ENCODE measurements at regions of chr5 and their contacts with region 1.

Region 1: DNA sequence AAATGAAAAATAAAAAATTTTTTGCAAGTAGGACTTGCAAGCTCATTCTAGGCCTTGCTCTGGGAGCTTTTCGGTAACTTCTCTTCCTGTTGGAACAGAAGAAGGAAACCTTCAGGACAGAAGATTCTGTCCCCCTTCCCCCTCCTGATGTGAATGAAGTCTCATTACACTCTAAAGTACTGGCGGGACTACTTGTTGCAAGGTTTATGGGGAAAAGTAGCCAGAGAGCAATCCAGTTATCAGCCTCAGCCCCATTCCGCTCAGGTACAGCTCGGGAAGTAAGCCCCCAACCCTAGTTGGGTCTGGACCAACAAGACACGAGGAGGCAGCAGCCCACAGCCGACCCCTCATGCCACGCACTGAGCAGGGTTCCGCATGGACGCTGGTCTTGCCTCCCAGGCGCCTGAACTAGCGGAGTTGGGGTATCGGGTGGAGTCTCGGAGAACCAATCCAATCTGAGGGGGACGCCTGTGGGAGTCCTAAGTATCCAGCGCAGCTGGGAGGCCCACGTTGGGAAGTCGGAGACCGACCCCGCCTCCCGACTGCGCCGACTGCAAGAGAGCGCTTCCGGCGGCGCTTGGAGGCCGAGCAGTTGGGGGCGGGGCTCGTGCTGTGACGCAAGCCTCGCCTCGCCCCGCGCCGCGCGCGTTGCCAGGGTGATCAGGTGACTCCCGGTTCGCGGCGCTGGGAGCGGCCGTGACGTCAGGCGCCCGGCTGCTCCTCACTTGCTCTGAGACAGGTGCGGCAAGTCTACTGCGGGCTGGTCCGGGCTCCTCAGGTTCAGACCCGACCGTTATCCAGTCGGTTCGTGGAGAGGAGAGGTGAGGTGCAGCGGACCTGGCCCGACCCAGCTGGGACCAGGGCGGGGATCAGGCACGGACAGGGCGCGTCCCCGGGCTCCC is at the start of gene CYSTM1:
- DNase-seq: peak; percentile 92 to 98 (median 96)
- ATAC-seq: peak; percentile 83
- H3K4me3 ChIP-seq: peak within 1 kb of the TSS; percentile 68 to 83
- H3K4me3 Mint-ChIP-seq: peak within 1 kb of the TSS; percentile 91
- H3K27ac ChIP-seq: peak within 1 kb of the TSS; percentile 79 to 88
- H3K27ac Mint-ChIP-seq: peak within 1 kb of the TSS; percentile 95
- H3K4me1 ChIP-seq: peaks cover 9% of the 10 kb centered on the region
- H3K4me1 Mint-ChIP-seq: peaks cover 13% of the 10 kb centered on the region
- H3K27me3 ChIP-seq: peaks cover 0 to 2% of the 10 kb centered on the region in 2 experiments
- H3K27me3 Mint-ChIP-seq: peaks cover 5% of the 10 kb centered on the region
- CTCF ChIP-seq: no peak
- total RNA-seq, gene CYSTM1: 8.1 to 8.6 TPM

Region 2: GRCh38 chr5:139711067-139711905 is 463.4 kb before region 1 on chr5:
- CTCF ChIA-PET with region 1: no interaction called
- POLR2A ChIA-PET with region 1: no interaction called
- intact Hi-C with region 1: loop called in 1 of 2 experiments (anchors 2 kb)
- DNase-seq: peak; percentile 32 to 90 (median 71)
- ATAC-seq: peak; percentile 60
- H3K4me3 ChIP-seq: peak overlapping the region; percentile 63 to 64
- H3K4me3 Mint-ChIP-seq: peak overlapping the region; percentile 77
- H3K27ac ChIP-seq: peak overlapping the region; percentile 66 to 84
- H3K27ac Mint-ChIP-seq: no peak overlapping the region
- H3K4me1 ChIP-seq: peaks cover 28% of the 10 kb centered on the region
- H3K4me1 Mint-ChIP-seq: peaks cover 39% of the 10 kb centered on the region
- H3K27me3 ChIP-seq: no peaks in the 10 kb centered on the region
- H3K27me3 Mint-ChIP-seq: no peaks in the 10 kb centered on the region
- CTCF ChIP-seq: no peak

Region 3: DNA sequence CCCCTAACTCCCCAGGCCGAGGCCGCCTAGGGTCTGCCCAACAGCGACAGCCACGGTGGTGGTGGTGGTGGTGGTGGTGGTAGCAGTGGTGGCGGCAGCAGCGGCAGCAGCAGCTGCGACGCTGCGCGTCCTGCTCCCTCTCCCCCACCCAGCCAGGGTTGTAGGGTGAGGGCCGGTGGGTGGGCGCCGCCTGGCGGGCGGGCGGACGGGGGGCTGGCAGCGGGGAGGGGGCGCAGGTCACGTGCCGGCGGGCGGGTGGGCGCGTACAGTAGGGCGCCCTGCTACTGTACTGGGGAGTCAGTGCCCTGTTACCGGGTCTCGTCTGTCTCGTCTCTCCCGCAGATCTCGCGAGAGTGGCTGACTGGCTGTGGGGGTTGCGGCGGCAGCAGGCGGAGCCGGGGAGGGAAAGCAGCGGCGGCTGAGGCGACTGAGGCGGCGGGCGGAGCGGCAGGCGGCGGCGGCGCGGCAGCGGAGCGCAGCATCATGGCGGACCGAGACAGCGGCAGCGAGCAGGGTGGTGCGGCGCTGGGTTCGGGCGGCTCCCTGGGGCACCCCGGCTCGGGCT is 60.9 kb before region 1 on chr5 and contains the start of gene PURA:
- CTCF ChIA-PET with region 1: no interaction called
- POLR2A ChIA-PET with region 1: interaction called, 8 read pairs
- intact Hi-C with region 1: loop called (anchors 1 to 2 kb)
- DNase-seq: peak; percentile 93 to 98 (median 98)
- ATAC-seq: peak; percentile 91
- H3K4me3 ChIP-seq: peak within 1 kb of the TSS; percentile 74 to 88
- H3K4me3 Mint-ChIP-seq: peak within 1 kb of the TSS; percentile 91
- H3K27ac ChIP-seq: peak within 1 kb of the TSS; percentile 82 to 84
- H3K27ac Mint-ChIP-seq: peak within 1 kb of the TSS; percentile 95
- H3K4me1 ChIP-seq: peaks cover 69% of the 10 kb centered on the region
- H3K4me1 Mint-ChIP-seq: peaks cover 77% of the 10 kb centered on the region
- H3K27me3 ChIP-seq: no peaks in the 10 kb centered on the region
- H3K27me3 Mint-ChIP-seq: peaks cover 12% of the 10 kb centered on the region
- CTCF ChIP-seq: no peak
- total RNA-seq, gene PURA: 4.0 to 4.3 TPM

Region 4: DNA sequence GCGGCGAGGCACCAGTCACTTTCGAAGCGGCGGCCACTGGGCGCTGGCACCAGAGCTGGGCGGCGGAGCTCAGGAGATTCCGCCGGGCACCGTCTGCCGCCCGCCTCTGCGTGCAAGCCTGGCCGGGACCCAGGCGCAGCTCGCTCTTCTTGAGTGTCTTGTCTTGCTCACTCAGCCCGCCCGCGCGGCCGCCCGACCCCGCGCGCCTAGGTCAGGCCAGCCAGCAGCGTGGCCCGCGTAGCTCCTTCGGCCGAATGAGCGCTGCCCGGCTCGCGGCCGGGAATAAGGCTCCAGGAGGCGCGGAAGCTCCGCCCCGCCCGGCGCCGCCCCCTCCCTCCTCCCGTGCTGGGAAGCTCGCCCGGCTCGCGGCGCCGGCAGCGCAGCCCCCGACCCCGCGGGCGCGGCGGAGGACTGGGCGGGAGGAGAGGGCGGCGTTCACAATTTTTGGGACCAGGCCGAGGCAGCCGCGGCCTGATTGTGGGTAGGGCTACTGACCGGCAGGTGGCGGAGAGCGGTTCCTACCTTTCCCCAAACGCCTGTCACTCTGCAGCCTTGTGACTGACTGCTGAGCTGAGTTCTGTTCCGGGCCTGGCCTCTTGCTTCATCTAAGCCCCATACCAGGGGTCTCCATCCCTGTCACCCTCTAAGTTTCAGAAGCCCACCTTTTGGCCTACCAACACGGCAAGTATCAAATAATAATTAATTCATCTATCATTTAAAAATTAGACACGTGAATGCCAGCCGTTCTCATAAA is 171.8 kb after region 1 on chr5 and contains the start of gene HBEGF:
- CTCF ChIA-PET with region 1: interaction called, 3 read pairs
- POLR2A ChIA-PET with region 1: interaction called, 3 read pairs
- intact Hi-C with region 1: loop called in 1 of 2 experiments (anchors 5 kb)
- DNase-seq: peak in 8 of 9 experiments; percentile 21 to 66 (median 50)
- ATAC-seq: peak; percentile 73
- H3K4me3 ChIP-seq: peak within 1 kb of the TSS; percentile 48 to 50
- H3K4me3 Mint-ChIP-seq: peak within 1 kb of the TSS; percentile 72
- H3K27ac ChIP-seq: no peak within 1 kb of the TSS
- H3K27ac Mint-ChIP-seq: no peak within 1 kb of the TSS
- H3K4me1 ChIP-seq: peaks cover 23% of the 10 kb centered on the region
- H3K4me1 Mint-ChIP-seq: peaks cover 33% of the 10 kb centered on the region
- H3K27me3 ChIP-seq: peaks cover 0 to 13% of the 10 kb centered on the region in 2 experiments
- H3K27me3 Mint-ChIP-seq: peaks cover 27% of the 10 kb centered on the region
- CTCF ChIP-seq: peak; percentile 41
- total RNA-seq, gene HBEGF: 0.30 to 0.50 TPM

Region 5: DNA sequence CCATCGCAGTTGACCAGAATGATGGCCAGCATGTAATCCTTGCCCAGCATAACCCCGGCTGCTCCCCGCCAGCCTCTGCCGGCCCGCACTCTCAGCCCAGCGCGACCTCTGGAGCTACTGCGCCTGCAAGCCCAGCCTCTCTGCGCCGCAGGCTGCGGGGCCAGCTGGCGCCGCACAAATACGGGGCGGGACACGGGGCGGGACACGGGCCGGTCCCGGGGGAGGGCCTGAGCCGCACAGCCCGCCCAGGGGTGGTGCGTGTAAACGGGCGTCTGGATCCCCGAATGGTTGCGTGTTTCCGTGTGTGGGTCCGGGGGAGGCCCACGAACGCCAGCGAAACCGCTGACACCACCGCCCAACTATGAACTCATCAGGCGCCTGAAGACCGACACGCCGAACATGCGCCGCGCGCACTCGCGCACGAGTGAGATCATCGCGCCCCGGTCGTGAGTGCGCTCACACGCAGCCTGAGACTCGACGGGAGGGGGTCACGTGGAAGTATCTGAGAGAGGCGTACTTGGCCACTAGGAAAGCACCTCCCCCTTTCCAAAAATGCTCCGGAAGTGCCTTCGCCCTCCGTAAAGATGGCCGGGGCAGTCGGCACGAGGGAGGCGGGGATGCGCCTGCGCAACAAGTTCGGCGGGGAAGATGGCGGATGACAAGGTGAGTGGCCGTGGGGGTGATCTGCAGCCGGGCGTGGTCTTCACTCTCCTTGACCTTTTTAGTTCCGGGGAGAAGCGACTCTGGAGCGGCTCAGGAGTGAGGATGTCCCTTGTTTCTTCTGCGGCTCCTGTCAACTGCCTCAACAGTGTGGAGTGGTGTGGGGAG is 389.7 kb after region 1 on chr5 and contains the starts of genes APBB3 and SLC35A4:
- CTCF ChIA-PET with region 1: no interaction called
- POLR2A ChIA-PET with region 1: no interaction called
- intact Hi-C with region 1: loop called in 1 of 2 experiments (anchors 2 kb)
- DNase-seq: peak; percentile 92 to 100 (median 95)
- ATAC-seq: peak; percentile 88
- H3K4me3 ChIP-seq: peak within 1 kb of the TSS; percentile 52 to 79
- H3K4me3 Mint-ChIP-seq: peak within 1 kb of the TSS; percentile 88
- H3K27ac ChIP-seq: peak within 1 kb of the TSS; percentile 73 to 92
- H3K27ac Mint-ChIP-seq: peak within 1 kb of the TSS; percentile 94
- H3K4me1 ChIP-seq: peaks cover 30% of the 10 kb centered on the region
- H3K4me1 Mint-ChIP-seq: peaks cover 62% of the 10 kb centered on the region
- H3K27me3 ChIP-seq: no peaks in the 10 kb centered on the region
- H3K27me3 Mint-ChIP-seq: no peaks in the 10 kb centered on the region
- CTCF ChIP-seq: no peak
- total RNA-seq, gene APBB3: 51.0 to 51.7 TPM
- total RNA-seq, gene SLC35A4: 14.8 to 19.4 TPM

Region 6: GRCh38 chr5:140710899-140711552 is 536.3 kb after region 1 on chr5:
- CTCF ChIA-PET with region 1: no interaction called
- POLR2A ChIA-PET with region 1: no interaction called
- intact Hi-C with region 1: loop called in 1 of 2 experiments (anchors 5 kb)
- DNase-seq: peak; percentile 66 to 95 (median 85)
- ATAC-seq: peak; percentile 83
- H3K4me3 ChIP-seq: peak overlapping the region; percentile 58 to 74
- H3K4me3 Mint-ChIP-seq: peak overlapping the region; percentile 99
- H3K27ac ChIP-seq: peak overlapping the region; percentile 72 to 86
- H3K27ac Mint-ChIP-seq: peak overlapping the region; percentile 99
- H3K4me1 ChIP-seq: no peaks in the 10 kb centered on the region
- H3K4me1 Mint-ChIP-seq: peaks cover 16% of the 10 kb centered on the region
- H3K27me3 ChIP-seq: no peaks in the 10 kb centered on the region
- H3K27me3 Mint-ChIP-seq: no peaks in the 10 kb centered on the region
- CTCF ChIP-seq: no peak